ENCODE measurements at regions of chr11 and their contacts with region 1.

Region 1: GRCh38 chr11:2532704-2533586 is 88.1 kb downstream of the KCNQ1 start:
- DNase-seq: peak; percentile 86 to 93 (median 91)
- H3K4me3 ChIP-seq: peak overlapping the region in 54 of 59 donors; percentile 12 to 58 (median 39)
- H3K27ac ChIP-seq: peak overlapping the region in 7 of 59 donors; percentile 5 to 51 (median 33)
- H3K27me3 ChIP-seq: peaks cover 0 to 3% (median 0%) of the 10 kb centered on the region in 45 donors
- CTCF ChIP-seq: peak; percentile 96 to 100 (median 99)

Region 2: GRCh38 chr11:2196970-2197770 is 335.8 kb before region 1 on chr11:
- intact Hi-C with region 1: loop called in 1 of 2 experiments (anchors 5 kb)
- DNase-seq: peak; percentile 41 to 82 (median 70)
- H3K4me3 ChIP-seq: no peak overlapping the region
- H3K27ac ChIP-seq: no peak overlapping the region
- H3K27me3 ChIP-seq: peaks cover 0 to 6% (median 0%) of the 10 kb centered on the region in 45 donors
- CTCF ChIP-seq: peak in 54 of 56 donors; percentile 30 to 74 (median 60)

Region 3: DNA sequence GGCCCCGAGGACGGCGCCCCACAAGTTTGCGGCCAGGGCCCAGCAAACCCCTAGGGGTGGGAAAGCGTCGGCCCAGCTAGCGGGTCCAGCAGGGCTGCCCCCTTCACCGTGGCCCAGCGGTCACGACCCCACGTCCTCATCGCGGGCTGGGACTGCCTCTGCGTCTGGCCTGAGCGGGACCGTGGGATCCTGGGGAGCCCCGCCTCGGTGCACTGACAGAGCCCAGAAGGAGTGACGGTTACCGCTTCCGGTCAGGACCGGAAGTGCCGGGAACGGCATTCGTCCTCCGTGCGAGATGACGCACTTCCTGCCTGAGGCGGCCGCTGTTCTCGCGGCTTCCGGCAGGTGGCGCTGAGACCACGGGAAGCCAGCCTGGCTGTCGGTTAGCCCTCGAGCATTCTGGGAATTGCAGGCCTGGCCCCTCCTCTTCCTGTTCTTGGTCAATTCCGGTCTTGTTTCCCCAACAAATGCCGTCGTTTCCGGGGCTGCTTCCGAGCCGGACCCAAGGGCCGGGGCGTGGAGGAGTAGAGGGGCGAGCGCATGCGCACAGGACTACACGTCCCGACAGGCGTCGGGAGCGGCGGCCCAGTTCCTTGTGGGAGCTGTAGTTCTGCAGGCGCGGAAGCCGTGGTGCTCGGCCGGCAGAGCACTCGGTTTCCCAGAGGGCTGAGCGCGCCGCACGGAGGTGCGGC is 132.7 kb before region 1 on chr11 and contains the start of gene TSSC4:
- intact Hi-C with region 1: loop called in 1 of 2 experiments (anchors 1 kb)
- DNase-seq: peak; percentile 98 to 99 (median 98)
- H3K4me3 ChIP-seq: peak within 1 kb of the TSS; percentile 65 to 100 (median 98)
- H3K27ac ChIP-seq: peak within 1 kb of the TSS; percentile 68 to 99 (median 96)
- H3K27me3 ChIP-seq: no peaks in the 10 kb centered on the region
- CTCF ChIP-seq: peak; percentile 95 to 100 (median 100)
- total RNA-seq, gene TSSC4: 23.7 to 48.6 (median 34.3) TPM

Region 4: GRCh38 chr11:2428322-2428795 is 104.6 kb before region 1 on chr11:
- intact Hi-C with region 1: loop called (anchors 1 kb)
- DNase-seq: peak in 6 of 10 donors; percentile 28 to 71 (median 42)
- H3K4me3 ChIP-seq: no peak overlapping the region
- H3K27ac ChIP-seq: no peak overlapping the region
- H3K27me3 ChIP-seq: peaks cover 0 to 6% (median 0%) of the 10 kb centered on the region in 45 donors
- CTCF ChIP-seq: peak in 54 of 56 donors; percentile 38 to 77 (median 64)

Region 5: GRCh38 chr11:2699531-2700414 is 166.8 kb after region 1 on chr11 and contains the start of gene KCNQ1OT1:
- intact Hi-C with region 1: loop called in 1 of 2 experiments (anchors 5 kb)
- DNase-seq: peak; percentile 80 to 94 (median 92)
- H3K4me3 ChIP-seq: peak within 1 kb of the TSS; percentile 34 to 80 (median 69)
- H3K27ac ChIP-seq: peak within 1 kb of the TSS in 58 of 59 donors; percentile 43 to 96 (median 92)
- H3K27me3 ChIP-seq: no peaks in the 10 kb centered on the region
- CTCF ChIP-seq: peak in 11 of 56 donors; percentile 6 to 31 (median 22)
- total RNA-seq, gene KCNQ1OT1: 2.4 to 9.8 (median 4.7) TPM

Region 6: GRCh38 chr11:2737866-2738265 is 204.9 kb after region 1 on chr11:
- intact Hi-C with region 1: loop called in 1 of 2 experiments (anchors 10 kb)
- DNase-seq: no peak
- H3K4me3 ChIP-seq: no peak overlapping the region
- H3K27ac ChIP-seq: no peak overlapping the region
- H3K27me3 ChIP-seq: no peaks in the 10 kb centered on the region
- CTCF ChIP-seq: no peak